Sciatic nerve (tissue), 2 donors: ENCODE measurements at regions of chr16 and their contacts with region 1.

Region 1: DNA sequence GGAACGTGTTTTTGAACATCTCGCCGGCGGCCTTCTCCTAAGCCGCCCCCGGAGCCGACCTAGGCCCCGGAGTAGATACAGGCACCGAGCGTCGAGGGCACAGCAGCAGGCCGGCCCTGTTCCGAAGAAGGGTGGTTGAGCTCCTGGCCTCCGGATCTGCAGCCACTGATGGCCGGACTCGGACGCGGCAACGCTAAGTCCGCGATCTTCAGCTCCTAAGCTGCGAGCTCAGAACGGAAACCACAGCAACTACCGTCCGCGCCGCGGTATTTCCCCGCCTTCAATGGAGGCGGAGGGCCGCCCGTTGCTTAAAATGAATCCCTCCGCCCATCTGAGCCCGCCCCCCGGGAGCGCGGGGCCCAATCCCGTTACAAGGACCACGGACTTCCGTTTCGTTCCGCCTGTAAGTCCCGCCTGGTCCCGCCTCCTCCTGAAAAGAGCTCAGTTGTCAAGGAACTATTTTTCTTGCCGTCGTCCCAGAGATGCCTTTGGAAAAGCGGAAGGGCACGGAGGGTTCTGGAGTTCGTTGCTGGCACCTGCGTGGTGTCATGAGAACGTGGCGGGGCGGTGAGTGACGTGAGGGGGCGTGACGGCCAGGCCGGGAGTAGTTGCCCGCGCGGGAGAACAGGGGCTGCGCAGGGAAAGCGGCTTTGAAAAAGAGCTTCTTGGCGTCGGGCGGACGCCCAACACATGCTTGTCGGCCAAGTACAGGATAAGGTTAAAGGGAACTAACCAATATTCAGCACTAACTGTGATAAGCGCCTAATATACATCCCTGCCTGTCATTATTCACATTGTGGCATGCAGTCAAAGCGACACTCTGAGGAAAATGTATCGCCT is at the start of gene CFAP20:
- DNase-seq: peak; percentile 99
- ATAC-seq: peak; percentile 98
- total RNA-seq, gene CFAP20: 27.2 TPM

Region 2: DNA sequence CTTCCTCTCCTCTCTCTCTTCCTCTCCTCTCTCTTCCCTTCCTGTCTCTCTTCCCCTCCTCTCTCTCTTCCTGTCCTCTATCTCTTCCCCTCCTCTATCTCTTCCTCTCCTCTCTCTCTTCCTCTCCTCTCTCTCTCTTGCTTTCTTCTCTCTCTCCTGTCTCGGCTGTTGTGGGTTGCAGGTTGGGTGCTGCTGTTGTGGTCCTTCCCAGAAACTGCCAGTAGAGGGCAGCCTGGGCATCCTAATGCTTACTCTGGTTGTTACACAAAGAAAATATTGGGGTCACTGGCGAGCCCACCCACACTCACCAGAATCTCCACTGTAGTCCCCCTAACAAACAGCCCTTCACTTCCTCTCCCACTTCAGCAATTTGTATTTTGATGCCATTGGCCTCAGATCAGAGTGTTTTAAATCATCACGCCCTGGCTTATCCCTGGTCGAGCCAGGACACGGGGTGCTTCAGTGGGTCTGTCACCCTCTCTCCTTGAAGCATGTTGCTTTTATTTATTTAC is 108.6 kb before region 1 on chr16:
- intact Hi-C with region 1: loop called (anchors 5 kb)
- DNase-seq: peak; percentile 85
- ATAC-seq: peak; percentile 61